ENCODE measurements at regions of chr9 and their contacts with region 1.

Region 1: DNA sequence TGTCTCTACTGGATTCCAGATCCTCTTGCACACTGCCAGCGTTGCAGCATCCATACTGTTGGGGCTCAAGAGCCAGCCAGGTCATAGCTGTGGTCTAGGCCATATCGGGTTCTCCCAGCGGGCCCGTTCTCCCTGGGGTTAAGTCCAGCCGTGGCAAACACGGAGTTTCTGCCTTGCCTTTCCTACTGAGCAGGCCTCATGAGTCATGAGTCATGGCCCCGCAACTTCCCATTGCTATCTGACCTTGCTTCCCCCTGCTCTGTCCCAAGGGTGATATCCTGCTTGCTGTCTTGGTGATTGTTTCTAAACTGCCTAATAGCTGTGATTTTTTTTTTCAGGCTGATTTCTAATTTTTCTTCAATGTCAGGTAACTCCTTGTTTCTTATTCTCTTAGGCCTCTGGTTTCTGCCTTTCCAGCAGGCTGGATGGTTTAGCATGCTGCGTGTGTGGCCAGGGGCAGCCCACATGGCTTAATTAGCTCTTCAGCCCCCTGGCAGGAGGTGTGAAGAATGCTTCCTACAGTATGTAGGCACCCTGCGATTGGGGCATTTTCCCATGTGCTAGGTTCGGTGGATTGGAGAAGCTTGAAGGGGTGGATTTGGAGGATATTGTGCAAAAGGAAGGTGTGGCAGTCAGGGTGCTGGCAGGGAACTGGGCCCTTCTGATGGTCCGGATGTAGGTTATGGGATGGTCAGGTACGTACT is 18.7 kb downstream of the DAPK1 start:
- DNase-seq: peak in 4 of 5 donors; percentile 43 to 72 (median 58)
- H3K4me3 ChIP-seq: no peak overlapping the region
- H3K27ac ChIP-seq: no peak overlapping the region
- H3K4me1 ChIP-seq: peaks cover 21% of the 10 kb centered on the region
- H3K27me3 ChIP-seq: no peaks in the 10 kb centered on the region
- CTCF ChIP-seq: no peak
- EP300 ChIP-seq: no peak
- POLR2A ChIP-seq: no peak

Region 2: GRCh38 chr9:86282077-86282978 is 1234.0 kb before region 1 on chr9 and contains the start of gene ISCA1:
- intact Hi-C with region 1: no loop called
- DNase-seq: peak; percentile 97 to 99 (median 99)
- H3K4me3 ChIP-seq: peak within 1 kb of the TSS; percentile 74
- H3K27ac ChIP-seq: peak within 1 kb of the TSS; percentile 89 to 94
- H3K4me1 ChIP-seq: peaks cover 4% of the 10 kb centered on the region
- H3K27me3 ChIP-seq: no peaks in the 10 kb centered on the region
- CTCF ChIP-seq: no peak
- EP300 ChIP-seq: peak; percentile 43
- POLR2A ChIP-seq: peak; percentile 70
- total RNA-seq, gene ISCA1: 22.5 to 35.4 (median 31.7) TPM

Region 3: DNA sequence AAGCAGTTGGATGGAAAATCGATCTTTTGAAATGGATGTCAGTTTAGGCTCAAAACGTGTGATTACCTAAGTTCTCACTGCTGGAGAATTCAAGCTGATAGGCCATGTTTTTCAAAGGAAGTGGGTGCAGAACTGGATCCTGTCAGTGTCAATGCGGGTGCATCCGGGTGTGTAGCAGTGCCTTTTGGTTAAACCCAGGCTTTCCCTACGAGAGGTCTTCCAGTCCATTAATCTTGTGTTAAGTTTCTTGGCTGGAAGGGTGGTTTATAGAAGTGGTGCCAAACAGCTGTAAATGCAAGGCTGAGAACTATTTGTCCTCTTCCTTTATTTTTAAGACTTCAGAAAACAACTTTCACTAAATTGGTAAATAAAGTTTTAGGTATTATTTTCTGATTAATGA is 53.1 kb after region 1 on chr9:
- intact Hi-C with region 1: loop called in 2 of 4 experiments (anchors 10 kb)
- DNase-seq: peak in 3 of 5 donors; percentile 51 to 61 (median 61)
- H3K4me3 ChIP-seq: no peak overlapping the region
- H3K27ac ChIP-seq: peak overlapping the region in 1 of 2 donors; percentile 1
- H3K4me1 ChIP-seq: peaks cover 46% of the 10 kb centered on the region
- H3K27me3 ChIP-seq: no peaks in the 10 kb centered on the region
- CTCF ChIP-seq: no peak
- EP300 ChIP-seq: no peak
- POLR2A ChIP-seq: no peak

Region 4: DNA sequence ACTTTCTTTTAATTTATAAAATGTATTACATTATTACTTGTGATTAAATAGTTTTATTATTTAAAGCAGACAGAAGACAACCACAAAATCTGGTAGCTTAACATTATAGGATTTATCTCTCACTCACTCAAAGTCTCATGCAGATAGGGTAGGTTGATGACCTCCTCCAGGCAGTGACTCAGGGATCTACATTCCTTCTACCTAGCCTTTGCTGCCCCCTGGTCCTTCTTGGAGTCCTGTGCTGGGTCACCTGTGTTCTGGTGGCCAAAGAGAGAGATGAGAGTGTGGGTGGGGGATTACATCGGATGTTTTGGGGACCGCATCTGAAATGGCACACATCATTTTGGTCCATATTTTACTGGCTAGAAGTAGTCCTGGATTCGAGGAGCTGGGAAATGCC is 113.9 kb after region 1 on chr9:
- intact Hi-C with region 1: loop called in 1 of 4 experiments (anchors 10 kb)
- DNase-seq: no peak
- H3K4me3 ChIP-seq: no peak overlapping the region
- H3K27ac ChIP-seq: no peak overlapping the region
- H3K4me1 ChIP-seq: peaks cover 5% of the 10 kb centered on the region
- H3K27me3 ChIP-seq: no peaks in the 10 kb centered on the region
- CTCF ChIP-seq: no peak
- EP300 ChIP-seq: no peak
- POLR2A ChIP-seq: no peak

Region 5: GRCh38 chr9:87640385-87640795 is 124.0 kb after region 1 on chr9:
- intact Hi-C with region 1: loop called in 2 of 4 experiments (anchors 5 to 10 kb)
- DNase-seq: peak; percentile 45 to 79 (median 69)
- H3K4me3 ChIP-seq: no peak overlapping the region
- H3K27ac ChIP-seq: peak overlapping the region in 1 of 2 donors; percentile 9
- H3K4me1 ChIP-seq: peaks cover 23% of the 10 kb centered on the region
- H3K27me3 ChIP-seq: no peaks in the 10 kb centered on the region
- CTCF ChIP-seq: no peak
- EP300 ChIP-seq: no peak
- POLR2A ChIP-seq: no peak

Measured in ovary (tissue), 10 donors.